HEK293T (cell line): ENCODE measurements at regions of chr21 and their contacts with region 1.

Region 1: GRCh38 chr21:25607151-25608043 is at the start of gene MRPL39:
- DNase-seq: peak; percentile 91

Region 2: DNA sequence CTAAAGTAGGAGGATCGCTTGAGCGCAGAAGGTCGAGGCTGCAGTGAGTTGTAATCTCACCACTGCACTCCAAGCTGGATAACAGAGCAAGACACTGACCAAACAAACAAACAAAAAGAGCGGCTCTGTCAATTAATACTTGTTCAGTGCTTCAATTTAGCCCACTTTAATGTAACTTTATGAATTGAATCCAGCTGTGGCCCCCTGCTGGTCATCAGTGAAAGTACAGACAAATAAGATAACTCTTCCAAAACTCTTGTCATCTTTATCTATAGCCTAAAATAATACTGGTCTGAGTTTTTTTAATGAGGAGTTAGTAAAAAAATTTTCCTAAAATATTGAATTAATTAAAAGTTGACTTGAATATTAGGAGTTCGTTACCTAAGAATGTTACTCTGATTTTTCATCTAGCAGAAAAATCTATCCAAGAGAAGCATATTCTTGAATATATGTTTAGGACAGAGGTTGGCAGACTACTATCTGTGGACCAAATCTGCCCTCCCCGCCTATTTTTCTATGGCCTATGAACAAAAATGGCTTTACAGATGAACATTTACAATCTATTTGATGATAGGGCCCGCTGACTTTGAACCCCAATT is 101.2 kb after region 1 on chr21:
- CTCF ChIA-PET with region 1: interaction called, 13 read pairs
- POLR2A ChIA-PET with region 1: no interaction called
- DNase-seq: peak; percentile 39